ENCODE measurements at regions of chr7 and their contacts with region 1.

Region 1: DNA sequence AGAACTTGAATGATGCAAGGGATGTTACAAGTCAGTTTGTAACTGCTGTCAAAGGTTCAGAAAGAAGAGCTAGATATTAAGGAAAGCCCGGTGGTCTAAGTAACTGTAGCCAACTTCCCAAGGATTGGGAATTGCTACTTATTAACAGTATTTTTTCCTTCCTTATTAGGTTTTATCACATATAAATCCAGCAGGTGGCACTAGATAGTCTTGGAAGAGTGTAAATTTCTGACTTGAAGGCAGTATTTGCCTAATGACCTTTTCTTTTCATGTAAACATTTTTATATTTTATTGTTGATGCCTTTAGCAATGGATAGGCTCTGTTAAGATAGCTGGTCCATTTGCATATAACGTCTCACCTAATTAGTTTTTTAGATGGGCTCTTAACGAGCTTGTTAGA is 51.2 kb downstream of the ANLN start:
- DNase-seq: peak; percentile 53
- H3K4me3 ChIP-seq: no peak overlapping the region
- H3K27ac ChIP-seq: no peak overlapping the region
- H3K4me1 ChIP-seq: no peaks in the 10 kb centered on the region
- H3K27me3 ChIP-seq: no peaks in the 10 kb centered on the region
- CTCF ChIP-seq: peak; percentile 77
- EP300 ChIP-seq: no peak
- RAD21 ChIP-seq: peak; percentile 72

Region 2: GRCh38 chr7:36227223-36227622 is 213.7 kb before region 1 on chr7:
- CTCF ChIA-PET with region 1: no interaction called
- POLR2A ChIA-PET with region 1: no interaction called
- DNase-seq: no peak
- H3K4me3 ChIP-seq: no peak overlapping the region
- H3K27ac ChIP-seq: no peak overlapping the region
- H3K4me1 ChIP-seq: peaks cover 0 to 24% of the 10 kb centered on the region in 2 experiments; a peak in 2 of 4 replicates
- H3K27me3 ChIP-seq: no peaks in the 10 kb centered on the region
- CTCF ChIP-seq: no peak
- EP300 ChIP-seq: no peak
- RAD21 ChIP-seq: no peak

Region 3: DNA sequence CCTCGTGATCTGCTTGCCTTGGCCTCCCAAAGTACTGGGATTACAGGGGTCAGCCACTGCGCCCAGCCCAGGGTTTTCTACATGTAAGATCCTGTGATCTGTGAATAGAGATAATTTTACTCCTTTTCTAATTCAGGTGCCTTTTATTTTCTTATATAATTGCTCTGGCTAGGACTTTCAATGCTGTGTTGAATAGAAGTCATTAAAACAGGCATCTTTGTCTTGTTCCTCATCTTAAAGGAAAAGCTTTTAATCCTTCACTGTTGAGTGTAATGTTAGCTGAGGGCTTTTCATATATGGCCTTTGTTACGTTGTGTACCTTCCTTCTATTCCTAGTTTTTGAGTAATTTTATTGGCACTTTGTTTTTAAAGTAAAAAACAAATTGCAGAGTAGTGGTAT is 24.6 kb before region 1 on chr7:
- CTCF ChIA-PET with region 1: interaction called, 17 read pairs
- POLR2A ChIA-PET with region 1: no interaction called
- DNase-seq: no peak
- H3K4me3 ChIP-seq: no peak overlapping the region
- H3K27ac ChIP-seq: no peak overlapping the region
- H3K4me1 ChIP-seq: no peaks in the 10 kb centered on the region; a peak in 1 of 4 replicates
- H3K27me3 ChIP-seq: no peaks in the 10 kb centered on the region
- CTCF ChIP-seq: no peak
- EP300 ChIP-seq: no peak
- RAD21 ChIP-seq: no peak

Region 4: GRCh38 chr7:36423633-36424032 is 17.2 kb before region 1 on chr7:
- CTCF ChIA-PET with region 1: interaction called, 25 read pairs
- POLR2A ChIA-PET with region 1: no interaction called
- DNase-seq: peak; percentile 40
- H3K4me3 ChIP-seq: no peak overlapping the region
- H3K27ac ChIP-seq: peak overlapping the region in 1 of 2 experiments; percentile 74; a peak in 2 of 4 replicates
- H3K4me1 ChIP-seq: peaks cover 0 to 12% of the 10 kb centered on the region in 2 experiments; a peak in 1 of 4 replicates
- H3K27me3 ChIP-seq: no peaks in the 10 kb centered on the region
- CTCF ChIP-seq: no peak
- EP300 ChIP-seq: peak in 1 of 2 experiments; percentile 71; a peak in 2 of 4 replicates
- RAD21 ChIP-seq: no peak

Region 5: GRCh38 chr7:36430186-36430585 is 10.7 kb before region 1 on chr7:
- CTCF ChIA-PET with region 1: interaction called, 25 read pairs
- POLR2A ChIA-PET with region 1: no interaction called
- DNase-seq: no peak
- H3K4me3 ChIP-seq: no peak overlapping the region
- H3K27ac ChIP-seq: peak overlapping the region in 1 of 2 experiments; percentile 23; a peak in 1 of 4 replicates
- H3K4me1 ChIP-seq: no peaks in the 10 kb centered on the region
- H3K27me3 ChIP-seq: no peaks in the 10 kb centered on the region
- CTCF ChIP-seq: no peak
- EP300 ChIP-seq: no peak
- RAD21 ChIP-seq: no peak

Region 6: DNA sequence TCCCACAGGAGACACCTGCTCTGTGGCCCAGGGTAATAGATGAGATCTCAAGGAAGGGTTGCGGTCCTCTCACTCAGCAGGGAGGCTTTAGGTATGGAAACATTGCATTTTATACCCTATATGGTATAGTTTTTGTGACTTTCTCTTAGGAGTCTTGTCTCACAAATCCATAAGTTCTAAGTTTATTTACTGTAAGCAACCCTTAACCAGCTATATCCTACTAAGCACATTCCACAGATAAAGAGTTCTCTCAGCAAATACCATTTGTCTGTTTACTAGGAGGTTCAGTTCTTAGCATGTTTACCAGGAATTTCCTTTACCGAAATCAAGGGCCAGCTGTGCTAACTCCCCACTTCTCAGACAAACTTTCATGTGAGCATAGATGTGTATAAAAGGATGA is 15.7 kb after region 1 on chr7:
- CTCF ChIA-PET with region 1: interaction called, 68 read pairs
- POLR2A ChIA-PET with region 1: no interaction called
- DNase-seq: no peak
- H3K4me3 ChIP-seq: no peak overlapping the region
- H3K27ac ChIP-seq: no peak overlapping the region
- H3K4me1 ChIP-seq: no peaks in the 10 kb centered on the region
- H3K27me3 ChIP-seq: no peaks in the 10 kb centered on the region
- CTCF ChIP-seq: no peak
- EP300 ChIP-seq: no peak
- RAD21 ChIP-seq: no peak

Region 7: GRCh38 chr7:36506820-36507219 is 65.9 kb after region 1 on chr7:
- CTCF ChIA-PET with region 1: no interaction called
- POLR2A ChIA-PET with region 1: no interaction called
- DNase-seq: no peak
- H3K4me3 ChIP-seq: no peak overlapping the region
- H3K27ac ChIP-seq: no peak overlapping the region
- H3K4me1 ChIP-seq: peaks cover 0 to 9% of the 10 kb centered on the region in 2 experiments; a peak in 1 of 4 replicates
- H3K27me3 ChIP-seq: no peaks in the 10 kb centered on the region; the same call in 1 of the 2 replicates
- CTCF ChIP-seq: no peak
- EP300 ChIP-seq: no peak
- RAD21 ChIP-seq: no peak

Region 8: DNA sequence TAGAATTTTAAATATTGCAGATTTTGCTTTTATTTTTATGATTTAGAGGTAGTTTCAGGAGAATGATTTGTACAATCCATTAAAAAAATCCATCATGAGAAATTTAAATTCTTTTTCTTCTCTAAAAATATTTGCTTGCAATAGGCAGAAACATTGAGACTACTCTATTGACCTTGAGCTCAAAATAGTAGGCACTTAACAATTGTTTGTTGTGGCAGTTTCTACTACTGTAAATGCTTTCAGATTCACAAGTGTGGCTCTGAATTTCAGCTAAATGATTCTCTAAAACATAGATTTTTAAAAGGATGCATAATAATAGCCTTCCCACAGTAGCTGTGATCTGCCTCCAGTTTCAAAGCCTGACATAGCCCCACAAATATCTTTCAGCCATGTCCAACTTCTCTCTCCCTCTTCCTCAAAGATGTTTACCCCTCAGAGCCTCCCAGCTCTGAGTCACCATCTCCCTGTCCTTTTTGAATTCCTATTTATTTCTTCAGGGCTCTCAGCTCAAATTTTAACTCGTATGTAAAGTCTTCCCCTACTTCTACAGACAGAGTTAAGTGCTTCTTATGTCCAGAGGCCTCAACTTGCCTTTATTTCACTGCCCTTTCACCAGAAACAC is 122.9 kb after region 1 on chr7:
- CTCF ChIA-PET with region 1: no interaction called
- POLR2A ChIA-PET with region 1: no interaction called
- DNase-seq: no peak
- H3K4me3 ChIP-seq: no peak overlapping the region
- H3K27ac ChIP-seq: no peak overlapping the region
- H3K4me1 ChIP-seq: peaks cover 0 to 8% of the 10 kb centered on the region in 2 experiments; a peak in 1 of 4 replicates
- H3K27me3 ChIP-seq: peaks cover 5% of the 10 kb centered on the region; the same call in 1 of the 2 replicates
- CTCF ChIP-seq: no peak
- EP300 ChIP-seq: no peak
- RAD21 ChIP-seq: no peak

Region 9: DNA sequence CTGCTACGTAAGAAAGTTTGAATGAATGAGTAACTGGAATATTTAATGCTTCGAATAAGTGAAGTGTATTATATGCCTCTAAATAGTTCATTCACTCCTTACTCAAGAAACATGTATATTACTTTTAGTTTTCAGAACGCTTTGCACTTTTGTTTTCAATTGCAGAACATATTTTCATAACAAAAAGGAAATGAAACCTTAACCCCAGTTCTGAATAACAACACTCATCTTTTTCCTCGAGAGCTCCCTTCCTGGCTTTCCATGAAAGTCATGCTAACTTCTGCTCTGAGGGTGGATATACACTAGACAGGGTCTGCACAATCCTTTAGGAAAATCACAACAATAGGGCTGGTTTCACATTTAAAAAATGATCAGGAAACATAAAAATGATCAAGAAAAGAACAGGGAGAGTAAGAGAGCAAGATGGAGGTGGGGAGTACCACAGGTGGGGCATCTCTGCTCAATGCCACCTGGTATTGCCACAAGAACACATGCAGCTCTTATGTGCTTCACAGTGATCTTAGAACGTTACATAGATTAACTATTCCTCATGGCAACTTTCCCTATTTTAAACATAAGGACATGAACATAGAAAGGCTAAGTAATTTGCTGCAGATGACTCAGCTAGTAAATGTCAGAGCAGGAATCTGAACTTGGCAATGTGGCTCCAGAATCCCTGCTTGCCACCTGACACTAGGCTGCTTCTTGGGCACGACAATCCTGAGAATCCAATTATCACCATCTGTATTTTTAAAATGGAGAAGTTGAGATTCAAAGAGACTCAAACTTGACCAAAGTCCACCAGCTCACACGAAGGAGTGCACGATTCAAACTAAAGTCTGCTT is 502.9 kb after region 1 on chr7:
- CTCF ChIA-PET with region 1: no interaction called
- POLR2A ChIA-PET with region 1: no interaction called
- DNase-seq: no peak
- H3K4me3 ChIP-seq: no peak overlapping the region
- H3K27ac ChIP-seq: no peak overlapping the region
- H3K4me1 ChIP-seq: peaks cover 0 to 32% of the 10 kb centered on the region in 2 experiments; a peak in 1 of 4 replicates
- H3K27me3 ChIP-seq: no peaks in the 10 kb centered on the region
- CTCF ChIP-seq: no peak
- EP300 ChIP-seq: no peak
- RAD21 ChIP-seq: no peak

Region 10: DNA sequence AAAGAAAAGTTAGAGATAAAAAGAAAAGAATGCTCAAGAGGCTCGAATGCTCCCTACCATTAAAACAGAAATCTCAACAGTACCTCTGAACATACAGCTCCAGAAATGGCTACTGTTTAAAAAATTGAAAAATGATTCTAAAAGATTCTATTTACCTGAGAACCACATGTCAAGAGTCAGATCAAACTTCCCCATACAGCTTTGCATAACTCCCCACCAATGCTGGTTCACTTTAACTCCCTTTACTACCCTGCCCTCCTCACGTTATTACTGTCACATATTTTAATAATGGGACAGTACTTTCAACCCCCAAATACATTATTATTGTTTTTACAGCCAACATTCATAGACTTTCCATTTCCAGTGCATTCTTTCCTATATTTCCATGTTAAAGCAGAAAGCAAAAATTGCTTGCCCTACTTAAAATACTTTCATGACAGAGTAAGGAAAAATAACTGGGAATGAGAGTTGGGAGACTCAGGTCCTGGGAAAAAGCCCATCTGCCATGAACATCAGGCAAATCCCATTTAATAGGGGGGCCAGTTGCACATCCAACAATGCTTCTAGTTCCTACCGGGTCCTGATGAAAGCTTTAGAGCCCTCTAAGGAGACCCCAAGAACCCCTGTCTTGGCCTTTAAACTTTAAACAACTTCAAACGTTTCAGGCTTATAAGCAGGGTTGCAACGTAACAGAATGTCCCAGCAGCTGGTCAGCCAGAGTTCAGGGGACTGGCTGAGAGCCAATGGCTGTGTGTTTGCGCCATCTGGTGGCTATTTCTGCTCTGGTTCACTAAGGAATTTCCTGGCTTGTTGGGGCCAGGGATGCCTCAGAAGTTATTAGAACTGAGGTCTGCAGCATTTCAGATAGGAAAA is 760.4 kb after region 1 on chr7:
- CTCF ChIA-PET with region 1: interaction called, 134 read pairs
- POLR2A ChIA-PET with region 1: no interaction called
- DNase-seq: peak; percentile 83
- H3K4me3 ChIP-seq: no peak overlapping the region
- H3K27ac ChIP-seq: no peak overlapping the region
- H3K4me1 ChIP-seq: peaks cover 0 to 15% of the 10 kb centered on the region in 2 experiments; a peak in 2 of 4 replicates
- H3K27me3 ChIP-seq: no peaks in the 10 kb centered on the region
- CTCF ChIP-seq: peak; percentile 99
- EP300 ChIP-seq: peak in 1 of 2 experiments; percentile 26; a peak in 1 of 4 replicates
- RAD21 ChIP-seq: peak; percentile 91